Activated CD8-positive, alpha-beta T cell treated with anti-CD3 and anti-CD28 coated beads, Interleukin-2, amount 10 ng/mL, durations not matched to agents 7 days and 5 days (primary cell): ENCODE measurements at regions of chr16 and their contacts with region 1.

Region 1: DNA sequence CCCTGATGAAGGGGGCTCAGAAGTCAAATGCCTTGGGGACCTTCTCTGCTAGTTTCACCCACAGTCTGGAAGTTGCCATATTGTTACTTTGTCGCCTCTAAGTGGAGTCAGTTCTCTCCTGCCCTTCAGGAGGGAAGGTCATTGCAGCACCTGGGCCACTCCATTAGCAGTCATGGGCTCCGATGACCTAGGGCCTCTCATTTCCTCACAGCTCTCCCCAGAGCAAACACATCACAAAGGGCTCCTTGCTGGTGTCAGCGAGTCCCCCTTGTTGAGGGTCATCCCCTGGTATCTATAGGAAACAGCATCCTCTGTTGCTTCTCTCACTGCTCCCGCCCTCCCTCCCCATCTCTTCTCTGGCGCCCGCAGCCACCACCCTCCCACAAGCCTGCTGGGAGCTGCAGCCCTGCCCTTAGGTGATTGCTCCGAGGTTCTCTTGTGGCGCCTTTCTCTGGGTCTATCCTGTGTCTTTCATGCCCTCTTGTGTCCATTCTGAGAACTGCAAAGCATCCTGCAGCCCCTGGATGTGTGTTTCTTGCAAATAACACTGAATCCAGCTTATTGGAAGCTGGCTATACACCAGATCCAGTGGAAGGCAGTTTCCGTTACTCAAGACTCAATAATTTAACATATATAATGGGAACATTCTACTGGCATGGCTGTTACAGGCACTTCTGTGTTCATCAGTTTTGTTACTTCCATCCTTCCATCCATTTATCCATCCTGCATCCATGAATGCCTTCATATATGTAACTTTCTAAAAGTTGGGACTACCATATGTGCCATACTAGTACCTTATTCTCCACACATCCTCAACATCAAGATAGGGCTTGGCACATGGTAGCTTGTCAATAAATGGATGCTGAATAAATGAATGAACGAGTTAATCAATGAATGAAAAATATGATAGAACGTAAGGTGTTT is 21.2 kb downstream of the PDILT start:
- DNase-seq: peak; percentile 70
- ATAC-seq: peak; percentile 82
- H3K4me3 Mint-ChIP-seq: no peak overlapping the region
- H3K27ac Mint-ChIP-seq: no peak overlapping the region
- H3K4me1 Mint-ChIP-seq: no peaks in the 10 kb centered on the region
- H3K27me3 Mint-ChIP-seq: peaks cover 5% of the 10 kb centered on the region

Region 2: DNA sequence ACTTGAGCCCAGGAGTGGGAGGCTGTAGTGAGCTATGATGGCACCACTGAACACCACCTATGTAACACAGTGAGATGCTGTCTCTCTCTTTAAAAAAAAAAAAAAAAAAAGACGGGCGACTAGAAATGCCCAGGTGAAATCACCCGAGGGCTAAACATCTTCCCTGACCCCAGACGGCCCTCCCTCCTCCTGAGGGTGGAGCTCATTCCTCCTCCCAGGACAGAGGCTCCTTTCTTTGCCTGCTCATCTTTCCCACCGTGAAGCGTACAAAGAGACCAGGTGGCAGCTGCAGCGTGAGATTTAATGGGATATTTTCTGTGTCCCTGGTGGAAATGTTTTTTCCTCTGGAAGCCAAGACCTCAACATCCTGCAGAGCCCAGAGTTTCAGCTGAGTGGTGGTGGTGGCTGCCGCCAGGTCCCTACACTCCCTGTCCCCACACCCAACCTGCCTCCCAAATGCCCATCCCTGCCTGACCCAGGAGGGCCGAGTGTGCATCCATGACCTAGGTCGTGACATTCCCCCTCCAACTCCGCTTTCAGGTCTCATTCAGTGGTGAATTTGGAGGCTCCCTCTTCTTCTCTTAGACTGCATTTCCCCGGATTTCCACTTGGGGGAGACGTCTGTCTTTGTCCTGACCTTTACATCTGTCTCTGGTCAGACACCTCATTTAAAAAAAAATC is 484.3 kb before region 1 on chr16:
- CTCF ChIA-PET with region 1: interaction called, 15 read pairs
- POLR2A ChIA-PET with region 1: no interaction called
- DNase-seq: peak; percentile 64
- ATAC-seq: peak; percentile 60
- H3K4me3 Mint-ChIP-seq: no peak overlapping the region
- H3K27ac Mint-ChIP-seq: no peak overlapping the region
- H3K4me1 Mint-ChIP-seq: no peaks in the 10 kb centered on the region
- H3K27me3 Mint-ChIP-seq: peaks cover 2% of the 10 kb centered on the region

Region 3: GRCh38 chr16:19907161-19907992 is 476.0 kb before region 1 on chr16:
- CTCF ChIA-PET with region 1: interaction called, 82 read pairs
- POLR2A ChIA-PET with region 1: no interaction called
- DNase-seq: peak; percentile 82
- ATAC-seq: peak; percentile 98
- H3K4me3 Mint-ChIP-seq: peak overlapping the region; percentile 13
- H3K27ac Mint-ChIP-seq: peak overlapping the region; percentile 14
- H3K4me1 Mint-ChIP-seq: peaks cover 8% of the 10 kb centered on the region
- H3K27me3 Mint-ChIP-seq: peaks cover 2% of the 10 kb centered on the region

Region 4: GRCh38 chr16:20300312-20301097 is 82.9 kb before region 1 on chr16:
- CTCF ChIA-PET with region 1: interaction called, 27 read pairs
- POLR2A ChIA-PET with region 1: no interaction called
- DNase-seq: peak; percentile 54
- ATAC-seq: peak; percentile 61
- H3K4me3 Mint-ChIP-seq: no peak overlapping the region
- H3K27ac Mint-ChIP-seq: no peak overlapping the region
- H3K4me1 Mint-ChIP-seq: no peaks in the 10 kb centered on the region
- H3K27me3 Mint-ChIP-seq: no peaks in the 10 kb centered on the region

Region 5: DNA sequence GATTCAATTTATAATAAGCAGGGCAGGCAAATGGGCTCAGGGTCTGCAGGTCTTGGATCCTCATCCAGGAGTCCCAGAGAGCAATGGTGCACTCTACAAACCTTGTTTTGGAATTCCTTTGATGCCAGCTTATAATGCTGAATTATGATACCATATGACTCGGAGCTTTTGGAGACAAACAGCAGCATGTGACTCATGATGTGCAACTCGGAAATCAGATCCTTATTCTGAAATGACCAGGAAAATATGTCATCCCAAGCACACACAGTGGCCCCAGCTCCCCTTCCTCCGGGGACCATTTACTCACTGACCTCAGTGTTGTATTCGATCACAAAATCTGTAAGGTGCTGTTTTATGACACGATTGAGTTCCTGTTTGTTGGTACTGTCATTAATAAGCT is 10.7 kb before region 1 on chr16:
- CTCF ChIA-PET with region 1: interaction called, 14 read pairs
- POLR2A ChIA-PET with region 1: no interaction called
- DNase-seq: no peak
- ATAC-seq: no peak
- H3K4me3 Mint-ChIP-seq: no peak overlapping the region
- H3K27ac Mint-ChIP-seq: no peak overlapping the region
- H3K4me1 Mint-ChIP-seq: no peaks in the 10 kb centered on the region
- H3K27me3 Mint-ChIP-seq: peaks cover 6% of the 10 kb centered on the region

Region 6: DNA sequence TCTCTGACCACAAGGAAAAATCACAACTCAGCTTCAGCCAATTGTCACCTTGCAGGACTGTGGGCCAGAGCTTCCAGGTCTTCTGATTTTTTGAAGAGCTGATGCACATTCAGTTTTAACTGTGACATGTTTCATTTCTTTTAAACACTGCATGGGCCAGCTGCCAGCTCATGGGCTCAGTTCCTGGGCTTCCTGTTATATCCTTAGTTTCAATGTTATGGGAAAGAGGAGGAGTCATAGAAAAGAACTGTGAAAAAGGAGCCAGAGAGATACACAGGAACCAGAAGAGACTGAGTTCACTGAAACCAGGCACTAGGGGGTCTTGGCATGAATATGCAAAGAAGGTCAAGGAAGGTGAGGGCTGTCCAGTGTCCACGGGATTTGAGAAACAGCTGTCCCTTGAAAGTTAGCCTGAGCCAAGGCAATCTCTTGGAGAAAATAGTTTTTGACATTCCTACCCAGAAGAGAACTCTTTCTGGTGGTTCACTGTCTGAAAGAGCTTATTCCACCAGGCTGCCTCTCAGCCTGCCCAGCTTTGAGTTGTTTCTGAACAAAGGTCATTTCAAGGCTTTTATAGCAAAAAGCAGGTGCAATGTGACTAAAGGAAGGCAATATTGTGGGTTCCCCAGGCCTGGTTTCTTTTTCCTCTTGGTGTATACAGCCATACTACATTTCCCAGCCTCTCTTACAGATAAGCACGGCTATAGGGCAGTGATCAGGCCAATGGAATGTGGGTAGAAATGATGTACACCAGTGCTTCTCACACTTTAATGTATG is 10.6 kb after region 1 on chr16:
- CTCF ChIA-PET with region 1: interaction called, 11 read pairs
- POLR2A ChIA-PET with region 1: no interaction called
- DNase-seq: no peak
- ATAC-seq: no peak
- H3K4me3 Mint-ChIP-seq: no peak overlapping the region
- H3K27ac Mint-ChIP-seq: no peak overlapping the region
- H3K4me1 Mint-ChIP-seq: no peaks in the 10 kb centered on the region
- H3K27me3 Mint-ChIP-seq: no peaks in the 10 kb centered on the region